ENCODE measurements at regions of chr5 and their contacts with region 1.

Region 1: GRCh38 chr5:139633295-139634027 is 14.7 kb upstream of the CXXC5 start:
- DNase-seq: no peak
- H3K4me3 ChIP-seq: no peak overlapping the region
- H3K27me3 ChIP-seq: no peaks in the 10 kb centered on the region
- CTCF ChIP-seq: peak; percentile 97

Region 2: GRCh38 chr5:139660923-139661814 is 27.7 kb after region 1 on chr5:
- CTCF ChIA-PET with region 1: interaction called, 19 read pairs
- POLR2A ChIA-PET with region 1: interaction called, 3 read pairs
- DNase-seq: peak; percentile 74
- H3K4me3 ChIP-seq: no peak overlapping the region
- H3K27me3 ChIP-seq: no peaks in the 10 kb centered on the region
- CTCF ChIP-seq: no peak

Region 3: DNA sequence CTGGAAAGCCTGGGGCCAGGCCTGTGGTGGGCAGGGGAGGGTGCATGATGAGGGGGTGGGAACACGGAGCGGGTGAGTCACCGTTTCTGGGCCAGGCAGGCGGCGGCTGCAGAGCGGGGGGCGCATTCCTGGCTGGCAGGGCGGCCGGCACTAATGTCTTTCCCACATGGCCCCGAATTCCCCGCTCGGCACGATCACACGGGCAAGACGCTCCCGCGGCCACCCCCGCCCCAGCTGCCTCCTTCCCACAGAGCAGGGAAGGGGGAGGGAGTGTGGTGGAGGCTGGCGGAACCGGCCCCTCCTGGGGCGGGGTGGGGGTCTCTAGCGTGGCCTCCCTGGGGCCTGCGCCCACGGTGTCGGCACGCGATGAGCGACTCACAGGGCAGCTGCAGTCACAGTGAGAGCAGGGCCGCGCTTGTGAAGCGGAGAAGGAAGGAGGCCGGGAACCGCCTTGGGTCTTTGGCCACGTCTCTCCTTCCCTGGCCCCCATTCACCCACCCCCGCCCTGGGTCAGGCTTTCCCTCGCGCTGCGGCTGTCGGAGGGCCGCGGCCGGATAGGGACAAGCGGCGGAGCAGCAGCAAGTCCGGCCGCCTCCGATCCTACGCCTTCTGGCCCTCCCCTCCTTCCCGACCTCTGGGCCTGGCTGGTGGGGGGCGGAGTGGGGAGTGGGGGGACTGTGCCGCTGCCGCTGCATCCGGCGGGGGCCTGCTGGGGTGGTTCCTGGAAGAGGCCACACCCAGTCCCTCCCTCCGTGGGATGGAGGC is 63.6 kb after region 1 on chr5:
- CTCF ChIA-PET with region 1: interaction called, 201 read pairs
- POLR2A ChIA-PET with region 1: no interaction called
- DNase-seq: peak; percentile 69
- H3K4me3 ChIP-seq: peak overlapping the region; percentile 45
- H3K27me3 ChIP-seq: no peaks in the 10 kb centered on the region
- CTCF ChIP-seq: no peak

Region 4: DNA sequence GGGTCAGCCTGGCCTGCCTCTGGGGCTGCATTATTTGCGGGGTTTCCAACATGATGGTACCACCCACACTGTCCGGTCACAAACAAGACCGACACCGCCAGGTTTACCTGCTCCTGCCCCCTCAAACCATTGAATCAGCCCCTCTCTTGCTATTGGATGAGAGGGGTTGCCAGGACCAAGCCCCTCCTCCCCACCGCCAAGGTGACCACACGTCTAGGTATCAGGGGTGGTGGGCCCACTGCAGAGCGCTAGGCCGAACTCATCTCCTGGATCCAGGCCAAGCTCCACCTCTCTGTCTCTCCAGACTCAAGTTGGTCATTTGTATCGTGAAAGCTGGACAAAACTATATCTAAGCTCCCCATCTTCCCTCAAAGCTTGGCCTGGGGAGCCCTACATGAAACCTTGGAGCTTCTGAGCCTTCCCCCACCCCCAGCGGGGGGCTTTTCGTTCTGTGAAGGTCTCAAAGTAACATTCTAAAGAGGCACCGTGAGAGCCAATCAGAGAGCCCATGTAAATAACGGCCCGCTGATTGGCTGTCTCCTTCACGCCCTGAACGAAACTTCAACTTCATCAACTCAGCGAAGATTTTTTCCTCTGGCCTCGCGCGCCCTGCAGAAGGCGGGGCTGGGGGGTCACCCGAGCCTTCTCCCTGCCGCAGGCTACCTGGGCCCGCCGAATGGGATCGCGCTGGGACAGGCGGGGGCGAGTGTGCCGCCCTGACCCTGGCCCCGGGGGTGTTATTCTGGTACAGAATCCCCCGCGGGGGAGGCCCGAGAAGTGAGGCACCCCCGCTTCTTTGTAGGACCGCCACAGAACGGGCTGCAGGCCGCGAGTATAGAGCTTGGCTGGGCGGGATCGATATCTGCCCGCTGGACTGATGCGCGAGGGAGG is 112.6 kb after region 1 on chr5:
- CTCF ChIA-PET with region 1: interaction called, 33 read pairs
- POLR2A ChIA-PET with region 1: no interaction called
- DNase-seq: no peak
- H3K4me3 ChIP-seq: peak overlapping the region; percentile 7
- H3K27me3 ChIP-seq: no peaks in the 10 kb centered on the region
- CTCF ChIP-seq: no peak

Region 5: GRCh38 chr5:139774980-139775661 is 141.7 kb after region 1 on chr5:
- CTCF ChIA-PET with region 1: interaction called, 498 read pairs
- POLR2A ChIA-PET with region 1: interaction called, 6 read pairs
- DNase-seq: no peak
- H3K4me3 ChIP-seq: no peak overlapping the region
- H3K27me3 ChIP-seq: peaks cover 13% of the 10 kb centered on the region
- CTCF ChIP-seq: peak; percentile 95

Region 6: GRCh38 chr5:139808493-139809139 is 175.2 kb after region 1 on chr5:
- CTCF ChIA-PET with region 1: no interaction called
- POLR2A ChIA-PET with region 1: no interaction called
- DNase-seq: no peak
- H3K4me3 ChIP-seq: no peak overlapping the region
- H3K27me3 ChIP-seq: no peaks in the 10 kb centered on the region
- CTCF ChIP-seq: no peak

Measured in BJ (cell line).